Activated CD4-positive, alpha-beta memory T cell treated with anti-CD3 and anti-CD28 coated beads for 36 hours (primary cell): ENCODE measurements at regions of chr15 and their contacts with region 1.

Region 1: GRCh38 chr15:50798684-50799083 is 33.2 kb upstream of the SPPL2A start:
- DNase-seq: no peak
- H3K4me3 Mint-ChIP-seq: no peak overlapping the region
- H3K27ac Mint-ChIP-seq: no peak overlapping the region
- H3K4me1 Mint-ChIP-seq: no peaks in the 10 kb centered on the region
- H3K27me3 Mint-ChIP-seq: no peaks in the 10 kb centered on the region

Region 2: DNA sequence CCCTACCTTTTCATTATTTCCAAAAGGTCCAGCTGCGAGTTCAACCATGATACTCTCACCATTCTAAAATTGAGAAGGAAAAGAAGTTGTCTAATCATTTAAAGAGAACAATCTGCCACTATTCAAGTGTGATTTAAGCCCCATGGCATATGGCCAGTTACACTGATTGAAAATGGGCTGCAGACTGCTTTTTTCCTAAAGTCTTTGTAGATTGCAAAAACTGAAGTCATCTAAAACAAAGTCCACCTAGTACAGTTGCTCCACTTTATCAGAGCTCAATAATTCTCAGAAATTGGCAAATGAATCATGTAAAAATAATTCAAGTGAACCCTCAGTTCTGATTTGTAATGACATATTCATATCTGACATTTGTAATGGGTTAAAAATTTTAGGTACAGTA is 72.4 kb before region 1 on chr15:
- CTCF ChIA-PET with region 1: no interaction called
- POLR2A ChIA-PET with region 1: no interaction called
- intact Hi-C with region 1: loop called (anchors 10 kb)
- DNase-seq: no peak
- H3K4me3 Mint-ChIP-seq: no peak overlapping the region
- H3K27ac Mint-ChIP-seq: no peak overlapping the region
- H3K4me1 Mint-ChIP-seq: peaks cover 12% of the 10 kb centered on the region
- H3K27me3 Mint-ChIP-seq: no peaks in the 10 kb centered on the region